ENCODE measurements at regions of chr19 and their contacts with region 1.

Region 1: DNA sequence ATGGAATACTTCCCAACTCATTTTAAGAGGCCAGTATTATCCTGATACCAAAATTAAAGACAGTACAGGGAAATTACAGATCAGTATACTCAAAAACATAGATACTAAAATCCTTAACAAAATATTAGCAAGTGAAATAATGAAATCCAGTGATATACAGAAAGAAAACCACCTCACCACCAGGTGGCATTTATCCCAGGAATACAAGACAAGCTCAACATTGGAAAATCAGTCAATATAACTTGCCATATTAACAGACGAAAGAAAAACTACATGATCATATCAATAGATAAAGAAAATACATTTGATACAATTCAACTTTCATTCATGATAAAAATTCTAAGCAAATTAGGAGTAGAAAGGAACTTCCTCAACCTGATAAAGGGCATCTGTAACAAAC is 6.7 kb upstream of the GNA15 start:
- DNase-seq: no peak
- H3K4me3 ChIP-seq: no peak overlapping the region
- H3K27ac ChIP-seq: no peak overlapping the region
- H3K4me1 ChIP-seq: no peaks in the 10 kb centered on the region
- H3K27me3 ChIP-seq: no peaks in the 10 kb centered on the region
- CTCF ChIP-seq: peak; percentile 65

Region 2: GRCh38 chr19:3163230-3163886 is 34.2 kb after region 1 on chr19:
- CTCF ChIA-PET with region 1: no interaction called
- POLR2A ChIA-PET with region 1: no interaction called
- intact Hi-C with region 1: loop called (anchors 2 kb)
- DNase-seq: peak in 1 of 2 experiments; percentile 24
- H3K4me3 ChIP-seq: no peak overlapping the region
- H3K27ac ChIP-seq: no peak overlapping the region
- H3K4me1 ChIP-seq: peaks cover 9% of the 10 kb centered on the region
- H3K27me3 ChIP-seq: no peaks in the 10 kb centered on the region
- CTCF ChIP-seq: peak; percentile 87

Region 3: GRCh38 chr19:3188627-3189510 is 59.8 kb after region 1 on chr19:
- CTCF ChIA-PET with region 1: no interaction called
- POLR2A ChIA-PET with region 1: no interaction called
- intact Hi-C with region 1: no loop called
- DNase-seq: no peak
- H3K4me3 ChIP-seq: no peak overlapping the region
- H3K27ac ChIP-seq: no peak overlapping the region
- H3K4me1 ChIP-seq: 0 out of 2 replicates have a peak, but pooled peaks cover 8% of the 10 kb centered on the region
- H3K27me3 ChIP-seq: no peaks in the 10 kb centered on the region
- CTCF ChIP-seq: no peak

Measured in PC-9 (cell line).